GM12878 (cell line): ENCODE measurements at regions of chr9 and their contacts with region 1.

Region 1: DNA sequence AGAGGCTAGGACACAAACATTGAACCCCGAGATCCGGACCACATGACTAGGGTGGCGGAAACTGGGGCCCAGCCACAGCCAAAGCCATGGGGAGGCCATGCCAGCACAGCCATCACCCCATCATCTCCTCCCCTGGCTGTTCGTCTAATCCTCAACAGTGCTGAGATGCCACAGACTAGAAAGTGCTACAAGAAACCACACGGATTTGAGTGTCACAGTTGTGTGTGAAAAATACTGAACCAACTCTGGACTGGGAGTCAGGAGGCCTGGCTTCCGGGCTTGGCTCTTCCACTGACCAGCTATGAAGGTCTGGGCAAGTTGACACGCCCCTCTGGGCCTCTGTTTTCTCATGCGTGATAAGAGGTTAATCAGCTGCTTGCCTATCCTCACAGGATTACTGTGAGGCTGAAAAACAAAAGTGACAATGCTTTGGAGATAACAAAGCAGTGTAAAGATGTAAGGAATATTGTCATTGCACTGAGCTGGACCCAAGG is 38.8 kb upstream of the SHB start:
- DNase-seq: no peak
- ATAC-seq: peak; percentile 76
- H3K4me3 ChIP-seq: no peak overlapping the region
- H3K27ac ChIP-seq: peak overlapping the region; percentile 30
- H3K4me1 ChIP-seq: peaks cover 10% of the 10 kb centered on the region
- H3K27me3 ChIP-seq: no peaks in the 10 kb centered on the region
- CTCF ChIP-seq: no peak
- EP300 ChIP-seq: no peak
- POLR2A ChIP-seq: no peak
- RAD21 ChIP-seq: no peak

Region 2: DNA sequence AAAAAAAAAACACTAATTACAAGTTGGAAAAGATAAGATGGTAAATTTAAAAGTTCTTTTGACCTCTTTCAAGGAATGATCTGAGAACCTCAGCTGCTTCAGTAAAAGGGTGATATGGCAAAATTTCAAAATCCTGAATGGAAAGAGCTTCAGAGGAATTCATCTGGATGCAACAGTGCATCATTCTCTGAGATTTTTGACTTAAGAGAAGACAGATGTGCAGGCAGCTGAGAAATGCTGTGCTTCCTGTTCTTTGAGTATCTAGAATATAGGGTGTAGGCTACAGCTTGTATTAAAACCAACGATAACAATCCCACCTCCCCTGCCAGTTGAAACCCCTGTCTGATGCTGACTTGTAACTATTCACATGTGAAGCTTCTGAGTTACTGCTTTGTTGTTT is 450.9 kb before region 1 on chr9:
- CTCF ChIA-PET with region 1: no interaction called
- POLR2A ChIA-PET with region 1: no interaction called
- RAD21 ChIA-PET with region 1: no interaction called
- SMC1A ChIA-PET with region 1: no interaction called
- in situ Hi-C with region 1: no loop called
- intact Hi-C with region 1: no loop called
- DNase-seq: no peak
- ATAC-seq: no peak
- H3K4me3 ChIP-seq: no peak overlapping the region
- H3K27ac ChIP-seq: no peak overlapping the region
- H3K4me1 ChIP-seq: no peaks in the 10 kb centered on the region
- H3K27me3 ChIP-seq: peaks cover 3 to 5% of the 10 kb centered on the region in 2 experiments
- CTCF ChIP-seq: no peak
- EP300 ChIP-seq: no peak
- POLR2A ChIP-seq: no peak
- RAD21 ChIP-seq: no peak

Region 3: GRCh38 chr9:38127271-38127882 is 19.5 kb after region 1 on chr9:
- CTCF ChIA-PET with region 1: interaction called, 22 read pairs
- POLR2A ChIA-PET with region 1: interaction called, 11 read pairs
- RAD21 ChIA-PET with region 1: interaction called, 21 read pairs
- SMC1A ChIA-PET with region 1: interaction called, 86 read pairs
- in situ Hi-C with region 1: no loop called
- intact Hi-C with region 1: no loop called
- DNase-seq: no peak
- ATAC-seq: peak; percentile 10; the same call in 1 of the 3 replicates
- H3K4me3 ChIP-seq: no peak overlapping the region
- H3K27ac ChIP-seq: no peak overlapping the region
- H3K4me1 ChIP-seq: no peaks in the 10 kb centered on the region
- H3K27me3 ChIP-seq: peaks cover 0 to 1% of the 10 kb centered on the region in 2 experiments; a peak in 2 of 4 replicates
- CTCF ChIP-seq: no peak
- EP300 ChIP-seq: no peak
- POLR2A ChIP-seq: no peak
- RAD21 ChIP-seq: no peak

Region 4: GRCh38 chr9:38141746-38142591 is 34.1 kb after region 1 on chr9:
- CTCF ChIA-PET with region 1: interaction called, 20 read pairs
- POLR2A ChIA-PET with region 1: interaction called, 10 read pairs
- RAD21 ChIA-PET with region 1: interaction called, 33 read pairs
- SMC1A ChIA-PET with region 1: interaction called, 37 read pairs
- in situ Hi-C with region 1: no loop called
- intact Hi-C with region 1: no loop called
- DNase-seq: no peak
- ATAC-seq: peak; percentile 76
- H3K4me3 ChIP-seq: no peak overlapping the region
- H3K27ac ChIP-seq: no peak overlapping the region
- H3K4me1 ChIP-seq: no peaks in the 10 kb centered on the region
- H3K27me3 ChIP-seq: peaks cover 0 to 1% of the 10 kb centered on the region in 2 experiments; a peak in 1 of 4 replicates
- CTCF ChIP-seq: no peak
- EP300 ChIP-seq: 0 out of 4 replicates have a peak, but pooled peaks of 1 of the 2 experiments have one; percentile 39
- POLR2A ChIP-seq: no peak
- RAD21 ChIP-seq: no peak

Region 5: GRCh38 chr9:38178237-38178636 is 70.4 kb after region 1 on chr9:
- CTCF ChIA-PET with region 1: no interaction called
- POLR2A ChIA-PET with region 1: no interaction called
- RAD21 ChIA-PET with region 1: interaction called, 10 read pairs
- SMC1A ChIA-PET with region 1: interaction called, 12 read pairs
- in situ Hi-C with region 1: no loop called
- intact Hi-C with region 1: no loop called
- DNase-seq: no peak
- ATAC-seq: peak; percentile 30; the same call in 1 of the 3 replicates
- H3K4me3 ChIP-seq: no peak overlapping the region
- H3K27ac ChIP-seq: no peak overlapping the region
- H3K4me1 ChIP-seq: peaks cover 18% of the 10 kb centered on the region
- H3K27me3 ChIP-seq: no peaks in the 10 kb centered on the region
- CTCF ChIP-seq: no peak
- EP300 ChIP-seq: no peak
- POLR2A ChIP-seq: no peak
- RAD21 ChIP-seq: no peak

Region 6: DNA sequence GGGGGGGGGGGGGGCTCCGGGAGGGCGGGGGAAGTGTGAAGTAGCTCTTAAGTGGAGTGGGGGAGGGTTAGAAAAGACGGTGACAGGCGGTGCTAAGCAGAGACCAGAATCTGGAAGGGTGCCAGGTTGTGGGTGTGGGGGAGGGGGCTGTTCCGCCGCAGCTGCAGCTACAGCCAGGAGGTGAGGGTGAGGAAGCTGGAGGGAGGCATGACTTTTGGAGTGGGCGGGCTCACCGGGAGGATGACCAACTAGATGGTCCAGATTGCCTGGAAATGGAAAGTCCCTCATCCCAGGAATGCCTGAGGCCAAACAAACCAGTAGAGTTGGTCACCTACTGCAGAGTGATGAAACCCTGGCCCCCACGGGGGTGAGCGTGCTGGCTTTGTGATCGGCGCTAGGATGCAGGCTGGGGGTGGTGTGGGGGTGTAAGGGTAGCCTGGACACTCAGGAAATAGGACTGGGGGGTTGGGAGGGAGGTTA is 119.2 kb after region 1 on chr9:
- CTCF ChIA-PET with region 1: no interaction called
- POLR2A ChIA-PET with region 1: interaction called, 4 read pairs
- RAD21 ChIA-PET with region 1: interaction called, 5 read pairs
- SMC1A ChIA-PET with region 1: interaction called, 30 read pairs
- in situ Hi-C with region 1: no loop called
- intact Hi-C with region 1: no loop called
- DNase-seq: peak; percentile 23
- ATAC-seq: peak; percentile 83
- H3K4me3 ChIP-seq: peak overlapping the region; percentile 32; the same call in 1 of the 2 replicates
- H3K27ac ChIP-seq: no peak overlapping the region
- H3K4me1 ChIP-seq: peaks cover 7% of the 10 kb centered on the region
- H3K27me3 ChIP-seq: peaks cover 0 to 5% of the 10 kb centered on the region in 2 experiments
- CTCF ChIP-seq: no peak
- EP300 ChIP-seq: no peak
- POLR2A ChIP-seq: no peak
- RAD21 ChIP-seq: no peak